ENCODE measurements at regions of chr19 and their contacts with region 1.

Region 1: DNA sequence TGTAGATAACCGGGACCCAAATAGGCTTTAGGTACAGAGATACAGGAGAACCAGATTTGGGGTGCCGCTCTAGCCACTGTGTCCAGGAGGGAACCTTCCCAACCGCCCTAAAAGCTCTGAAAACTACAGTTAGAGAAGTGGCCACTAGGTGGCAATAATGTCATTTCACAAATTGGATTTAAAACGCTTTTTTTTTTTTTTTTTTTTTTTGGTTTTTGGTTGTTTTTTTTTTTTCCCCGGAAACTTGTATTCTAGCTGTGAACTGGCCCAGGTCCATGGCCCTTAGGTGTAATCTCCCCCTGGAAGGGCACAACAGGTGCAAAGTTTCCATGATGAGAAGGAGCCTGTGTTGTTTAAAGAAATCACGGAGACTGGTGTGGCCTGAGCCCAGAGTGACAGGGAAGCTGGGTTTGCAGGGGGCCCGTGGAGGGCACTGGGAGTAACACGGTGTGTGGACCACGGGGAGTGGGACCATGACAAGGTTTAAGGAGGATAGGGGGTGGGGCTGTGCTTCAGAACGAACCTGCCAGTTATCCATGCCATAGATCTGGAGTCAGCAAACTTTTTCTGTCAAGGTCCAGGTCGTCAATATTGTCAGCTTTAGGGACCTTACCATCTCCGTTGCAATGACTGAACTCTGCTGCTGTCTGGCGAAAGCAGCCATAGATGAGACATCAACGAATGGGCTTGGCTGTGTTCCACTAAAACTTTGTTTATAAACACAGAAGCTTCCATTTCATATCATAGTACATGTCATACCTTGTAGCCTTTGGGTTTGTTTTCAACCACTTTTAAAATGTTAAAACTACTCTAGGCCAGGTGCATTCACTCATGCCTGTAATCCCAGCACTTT is 10.1 kb downstream of the OR1I1 start:
- DNase-seq: peak; percentile 25
- H3K27ac ChIP-seq: no peak overlapping the region
- CTCF ChIP-seq: peak; percentile 77

Region 2: DNA sequence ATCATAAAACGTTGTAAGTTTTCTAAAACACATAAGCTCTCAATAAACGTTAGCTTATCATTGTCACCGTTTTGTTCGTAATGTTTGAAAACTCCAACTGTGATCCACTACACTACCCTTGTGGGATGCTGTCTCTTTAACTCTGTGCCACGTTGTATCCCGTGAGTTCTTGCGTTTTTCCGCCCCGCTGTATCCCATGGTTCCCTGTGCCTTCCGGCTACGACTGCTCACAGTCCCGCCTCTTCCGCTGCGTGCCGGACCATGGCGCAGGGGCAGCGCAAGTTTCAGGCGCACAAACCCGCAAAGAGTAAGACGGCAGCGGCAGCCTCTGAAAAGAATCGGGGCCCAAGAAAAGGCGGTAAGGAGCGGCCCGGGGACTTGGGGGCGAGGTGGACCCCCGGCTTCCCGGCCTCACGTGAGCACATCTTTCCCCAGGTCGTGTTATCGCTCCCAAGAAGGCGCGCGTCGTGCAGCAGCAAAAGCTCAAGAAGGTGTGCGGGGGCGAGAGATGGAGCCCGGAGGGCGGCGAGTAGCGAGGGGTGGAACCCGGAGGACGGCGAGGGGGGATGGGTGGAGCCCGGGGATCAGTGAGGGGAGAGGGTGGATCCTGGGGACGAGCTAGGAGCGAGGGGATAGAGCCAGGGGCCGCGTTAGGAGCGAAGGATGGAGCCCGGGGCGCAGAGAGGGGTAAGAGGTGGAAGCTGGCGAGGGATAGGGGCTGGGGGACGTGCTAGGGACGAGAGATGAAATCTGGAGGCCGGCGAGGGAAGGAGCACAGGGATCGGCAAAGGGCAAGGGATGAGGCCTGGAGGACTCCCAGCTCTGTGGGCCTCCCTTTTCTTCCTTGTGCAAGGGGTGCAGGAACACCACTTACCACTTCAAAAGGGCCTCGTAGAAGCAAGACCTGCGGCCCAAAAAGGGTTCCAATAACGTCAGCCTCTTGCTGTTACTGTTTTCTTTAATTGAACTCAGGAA is 1317.6 kb before region 1 on chr19 and contains the start of gene C19orf53:
- CTCF ChIA-PET with region 1: no interaction called
- POLR2A ChIA-PET with region 1: no interaction called
- DNase-seq: peak; percentile 96
- H3K27ac ChIP-seq: peak within 1 kb of the TSS; percentile 88
- CTCF ChIP-seq: no peak

Region 3: GRCh38 chr19:14728595-14728994 is 363.5 kb before region 1 on chr19:
- CTCF ChIA-PET with region 1: no interaction called
- POLR2A ChIA-PET with region 1: no interaction called
- DNase-seq: no peak
- H3K27ac ChIP-seq: no peak overlapping the region
- CTCF ChIP-seq: no peak

Region 4: GRCh38 chr19:15081911-15082310 is 10.2 kb before region 1 on chr19 and contains the start of gene OR1I1:
- CTCF ChIA-PET with region 1: interaction called, 11 read pairs
- POLR2A ChIA-PET with region 1: no interaction called
- DNase-seq: no peak
- H3K27ac ChIP-seq: no peak within 1 kb of the TSS
- CTCF ChIP-seq: no peak

Region 5: GRCh38 chr19:15149737-15150136 is 57.6 kb after region 1 on chr19:
- CTCF ChIA-PET with region 1: interaction called, 23 read pairs
- POLR2A ChIA-PET with region 1: no interaction called
- DNase-seq: no peak
- H3K27ac ChIP-seq: no peak overlapping the region
- CTCF ChIP-seq: no peak

Region 6: DNA sequence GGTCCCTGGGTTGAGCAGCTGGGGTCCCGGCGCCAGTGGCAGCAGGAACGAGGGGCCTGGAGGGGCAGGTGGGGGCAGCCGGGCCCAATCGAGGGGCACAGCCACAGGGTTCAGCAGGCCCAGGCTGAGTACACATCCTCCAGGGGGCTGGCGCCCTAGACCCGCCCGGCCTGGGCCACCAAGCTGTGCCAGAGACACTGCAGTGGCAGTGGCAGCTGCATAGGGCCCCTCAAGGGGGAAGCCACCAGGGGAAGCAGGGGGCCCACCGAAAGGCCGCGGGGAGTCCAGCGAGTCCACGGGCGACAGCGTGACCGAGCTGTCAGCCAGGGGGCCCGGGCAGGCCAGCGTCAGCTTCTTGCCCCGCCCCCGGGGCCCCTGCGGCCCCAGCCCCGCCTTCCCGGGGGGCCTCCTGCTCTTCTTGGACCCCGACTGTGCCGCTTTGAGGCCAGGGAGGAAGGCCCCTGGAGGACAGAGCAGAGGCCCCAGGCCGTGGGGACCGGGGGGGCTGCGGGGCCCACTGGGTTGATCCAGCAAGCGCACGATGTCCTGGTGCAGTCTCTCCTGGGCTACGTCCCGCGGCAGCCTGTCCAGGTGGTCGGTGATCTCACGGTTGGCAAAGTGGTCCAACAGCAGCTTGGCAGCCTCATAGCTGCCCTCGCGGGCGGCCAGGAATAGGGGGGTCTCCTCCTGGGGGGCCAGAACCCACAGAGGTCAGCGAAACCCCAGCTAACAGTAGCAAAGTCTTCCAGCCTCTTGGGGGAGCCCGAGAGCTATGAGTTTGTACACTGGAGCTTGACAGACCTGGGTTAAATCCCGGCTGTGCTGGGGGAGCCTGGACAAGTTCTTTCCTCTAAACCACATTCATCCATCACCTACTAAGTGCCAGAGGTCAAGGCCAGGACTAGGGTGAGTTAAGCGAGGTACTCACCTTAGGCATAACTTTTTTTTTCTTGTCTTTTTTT is 69.2 kb after region 1 on chr19:
- CTCF ChIA-PET with region 1: interaction called, 16 read pairs
- POLR2A ChIA-PET with region 1: no interaction called
- DNase-seq: peak; percentile 60
- H3K27ac ChIP-seq: no peak overlapping the region
- CTCF ChIP-seq: peak; percentile 71

Measured in RWPE1 (cell line).